GM13977 (cell line): ENCODE measurements at regions of chr3 and their contacts with region 1.

Region 1: GRCh38 chr3:195522254-195523023 is 20.7 kb downstream of the PPP1R2 start:
- DNase-seq: peak; percentile 46
- CTCF ChIP-seq: peak; percentile 47

Region 2: DNA sequence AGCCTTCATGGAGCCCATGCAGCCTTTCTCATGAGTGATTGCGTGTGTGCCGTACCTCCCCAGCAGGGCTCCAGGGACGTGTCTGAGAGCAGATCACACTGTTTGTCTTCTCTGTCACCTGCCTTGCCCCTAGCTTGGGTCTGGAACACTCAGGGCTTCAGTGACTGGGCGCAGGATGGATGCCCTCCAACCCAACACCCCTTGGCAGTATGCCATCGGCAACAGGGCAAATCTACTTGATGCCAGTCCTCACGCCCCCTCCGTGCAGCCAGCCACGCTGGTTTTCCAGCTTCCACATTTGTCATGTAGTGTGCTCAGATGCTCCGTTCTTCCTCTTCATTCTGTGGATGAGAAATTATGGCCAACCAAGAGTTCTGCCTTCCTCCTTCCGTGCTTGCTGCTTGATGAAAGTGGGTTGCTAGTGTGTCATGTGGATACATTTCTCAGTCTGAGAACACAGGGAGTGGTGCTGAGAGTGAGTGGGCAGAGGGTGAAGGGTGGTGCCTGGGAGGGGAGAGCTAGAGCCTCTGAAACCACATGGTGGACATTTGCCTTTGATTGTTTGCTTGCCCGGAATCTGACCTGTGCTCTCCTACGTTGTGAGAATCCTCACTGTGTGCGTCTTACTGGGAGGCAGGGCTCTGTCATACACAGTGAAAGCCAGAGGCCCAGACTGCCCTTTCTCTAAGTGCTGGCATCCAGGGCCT is 739.6 kb before region 1 on chr3:
- in situ Hi-C with region 1: no loop called
- DNase-seq: no peak
- CTCF ChIP-seq: no peak

Region 3: DNA sequence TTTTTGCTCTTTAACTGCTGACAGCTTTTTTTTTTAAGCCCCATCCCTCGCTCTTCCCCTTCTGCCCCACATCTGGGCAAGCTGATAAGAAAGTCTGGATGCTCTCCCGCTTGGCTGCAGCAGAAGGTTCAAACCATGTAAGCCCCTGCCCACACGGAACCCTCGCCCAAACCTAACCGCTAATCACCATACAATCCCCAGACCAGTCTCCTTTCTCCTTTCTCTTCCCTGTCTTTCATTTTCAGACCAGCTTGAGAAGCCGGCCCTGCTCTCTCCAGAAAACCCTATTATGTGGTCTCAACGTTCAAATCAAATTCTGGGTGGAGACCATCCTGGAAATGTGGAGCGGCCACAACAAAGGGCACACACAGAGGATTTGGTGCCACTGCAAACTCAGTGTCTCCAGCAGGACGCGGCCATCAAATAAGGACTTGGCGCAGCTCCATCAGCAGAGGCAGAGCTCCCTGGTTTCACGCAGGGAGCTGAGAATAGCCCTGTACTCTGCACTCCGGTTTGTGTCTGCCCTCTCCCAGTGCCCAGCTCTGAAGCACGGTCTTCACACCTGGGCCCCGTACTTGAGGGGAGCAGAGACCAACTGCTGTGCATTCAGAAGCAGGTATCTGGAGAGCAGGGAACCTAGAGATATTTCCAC is 344.2 kb before region 1 on chr3:
- in situ Hi-C with region 1: no loop called
- DNase-seq: no peak
- CTCF ChIP-seq: no peak

Region 4: DNA sequence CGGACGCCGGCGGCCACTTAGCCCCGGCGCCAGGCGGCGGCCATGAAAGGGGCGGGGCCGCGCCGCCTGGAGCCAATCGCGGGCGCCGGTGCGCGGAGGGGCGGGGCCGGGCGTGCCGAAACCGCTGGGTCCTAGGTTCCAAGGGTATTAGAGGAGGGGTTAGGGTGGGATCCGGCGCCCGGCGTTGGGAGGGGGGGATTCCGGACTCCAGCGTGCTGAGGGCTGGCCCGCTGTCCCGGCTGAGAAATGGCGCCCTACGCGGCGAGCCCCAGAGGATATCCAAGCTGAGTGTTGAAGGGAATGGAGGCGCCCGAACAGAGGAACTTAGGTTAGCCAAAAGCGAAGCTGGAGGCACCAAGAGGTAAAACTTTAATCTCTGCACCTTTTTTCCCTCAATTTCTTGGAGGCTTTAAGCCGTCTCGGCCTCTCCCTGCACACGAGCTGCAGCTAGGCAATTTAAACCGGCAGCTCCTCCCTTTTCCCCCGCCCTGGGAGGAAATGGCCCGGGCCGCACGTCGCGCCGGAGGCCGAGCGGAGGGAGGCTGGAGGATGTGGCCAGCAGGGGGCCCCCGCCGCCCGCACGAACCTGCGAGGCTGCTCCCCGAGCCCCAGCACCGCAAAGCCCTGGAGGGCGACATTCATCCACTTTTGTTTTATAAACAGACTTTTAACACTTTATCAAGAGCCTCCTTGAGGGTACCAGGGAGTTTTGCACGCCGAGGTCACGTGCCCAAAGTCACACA is 251.2 kb before region 1 on chr3 and contains the start of gene XXYLT1:
- in situ Hi-C with region 1: loop called (anchors 5 kb)
- DNase-seq: peak; percentile 95
- CTCF ChIP-seq: peak; percentile 97